ENCODE measurements at regions of chr2 and their contacts with region 1.

Region 1: GRCh38 chr2:199739413-199740110 is 111.4 kb downstream of the FTCDNL1 start:
- DNase-seq: no peak
- H3K4me3 ChIP-seq: no peak overlapping the region
- CTCF ChIP-seq: peak; percentile 73

Region 2: DNA sequence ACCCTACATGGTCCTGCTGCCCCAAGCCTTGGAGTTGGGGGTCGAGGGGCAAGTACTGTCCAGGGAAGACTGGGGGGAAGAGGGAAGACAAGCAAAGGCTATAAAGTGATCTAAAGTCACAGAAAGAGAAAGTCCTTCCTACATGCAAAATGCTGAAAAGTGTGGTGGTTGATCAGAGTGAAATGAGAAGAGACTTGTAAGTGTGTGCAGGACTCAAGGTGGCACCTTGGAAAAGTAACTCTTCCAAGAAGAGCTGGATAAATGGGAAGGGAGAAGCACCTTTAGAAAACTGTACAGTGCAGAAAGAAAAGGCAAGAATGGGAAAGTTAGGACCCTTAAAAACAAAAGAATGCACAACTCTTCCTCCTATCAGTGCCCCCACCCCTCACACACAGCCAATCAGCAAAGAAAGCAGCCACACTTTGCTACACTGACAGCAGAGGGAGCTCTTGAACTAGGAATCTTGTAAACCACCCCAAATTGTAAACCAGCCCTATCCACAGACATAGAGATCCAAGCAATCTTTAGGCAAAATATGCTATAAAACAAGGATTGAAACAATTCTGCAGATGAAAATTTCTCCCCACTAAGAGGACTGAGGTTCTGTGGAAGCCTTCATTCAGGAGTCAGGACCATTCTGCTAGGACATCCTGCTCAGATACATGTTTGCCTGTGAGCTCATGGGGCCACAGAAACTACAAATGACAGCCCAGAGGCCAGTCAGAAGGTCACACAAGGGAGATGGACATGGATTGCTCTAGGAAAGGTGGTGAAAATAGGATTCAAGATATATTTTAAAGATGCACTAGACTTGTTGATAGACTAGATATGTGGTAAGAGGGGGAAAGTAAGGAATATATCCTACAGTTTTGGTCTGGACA is 35.0 kb before region 1 on chr2:
- CTCF ChIA-PET with region 1: interaction called, 28 read pairs
- POLR2A ChIA-PET with region 1: no interaction called
- DNase-seq: no peak
- H3K4me3 ChIP-seq: no peak overlapping the region
- CTCF ChIP-seq: peak; percentile 40

Region 3: GRCh38 chr2:199716807-199717586 is 22.6 kb before region 1 on chr2:
- CTCF ChIA-PET with region 1: interaction called, 14 read pairs
- POLR2A ChIA-PET with region 1: no interaction called
- DNase-seq: no peak
- H3K4me3 ChIP-seq: no peak overlapping the region
- CTCF ChIP-seq: no peak

Region 4: DNA sequence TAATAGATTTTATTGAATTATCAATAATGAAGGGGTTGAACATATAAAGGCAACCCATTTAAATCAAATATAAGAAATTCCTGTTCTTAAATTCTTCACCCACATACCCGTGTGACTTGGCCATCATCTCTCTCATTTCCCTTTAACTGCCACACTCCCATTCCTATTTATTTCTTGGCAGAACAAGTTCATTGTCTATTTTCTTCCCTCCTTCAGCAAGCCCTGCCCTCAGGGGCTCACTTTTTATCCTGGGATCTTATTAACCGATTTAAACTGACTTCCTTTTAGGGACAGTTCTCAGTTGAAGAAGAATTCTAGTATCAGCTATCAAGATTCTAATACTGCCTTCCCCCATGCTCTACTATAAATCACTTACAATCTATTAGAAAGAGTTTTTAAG is 11.8 kb before region 1 on chr2:
- CTCF ChIA-PET with region 1: interaction called, 18 read pairs
- POLR2A ChIA-PET with region 1: no interaction called
- DNase-seq: no peak
- H3K4me3 ChIP-seq: no peak overlapping the region
- CTCF ChIP-seq: no peak

Region 5: DNA sequence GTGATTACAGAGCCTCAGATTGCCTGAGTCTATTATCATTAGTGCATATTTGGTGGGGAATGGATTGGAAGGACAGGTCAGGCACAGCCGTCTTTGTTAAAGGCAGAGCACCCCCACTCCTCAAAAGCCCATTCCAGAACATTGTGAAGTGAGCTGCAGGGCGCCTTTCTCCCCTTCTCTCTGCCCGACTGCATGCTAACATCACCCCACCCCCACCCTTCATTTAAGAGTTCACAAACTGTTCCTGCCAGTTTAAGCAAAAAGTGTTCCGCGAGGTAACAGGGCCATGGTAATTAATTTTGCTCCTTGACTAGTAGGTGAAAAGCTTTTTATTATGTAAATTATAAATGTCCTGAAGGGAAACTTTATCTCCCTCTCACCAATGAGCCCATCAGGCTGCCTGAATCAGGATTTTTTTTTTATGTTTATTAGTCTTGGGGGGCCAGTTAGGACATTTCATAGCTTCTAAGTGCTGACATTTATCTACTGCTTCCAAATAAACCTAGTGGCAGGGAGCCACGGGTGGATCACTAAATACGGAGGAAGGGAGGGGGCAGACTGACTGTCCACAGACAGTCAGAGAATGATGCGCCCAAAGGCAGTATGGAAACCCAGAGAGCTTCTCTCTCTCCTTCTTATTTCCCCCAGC is 12.0 kb after region 1 on chr2:
- CTCF ChIA-PET with region 1: interaction called, 30 read pairs
- POLR2A ChIA-PET with region 1: no interaction called
- DNase-seq: no peak
- H3K4me3 ChIP-seq: no peak overlapping the region
- CTCF ChIP-seq: no peak

Region 6: DNA sequence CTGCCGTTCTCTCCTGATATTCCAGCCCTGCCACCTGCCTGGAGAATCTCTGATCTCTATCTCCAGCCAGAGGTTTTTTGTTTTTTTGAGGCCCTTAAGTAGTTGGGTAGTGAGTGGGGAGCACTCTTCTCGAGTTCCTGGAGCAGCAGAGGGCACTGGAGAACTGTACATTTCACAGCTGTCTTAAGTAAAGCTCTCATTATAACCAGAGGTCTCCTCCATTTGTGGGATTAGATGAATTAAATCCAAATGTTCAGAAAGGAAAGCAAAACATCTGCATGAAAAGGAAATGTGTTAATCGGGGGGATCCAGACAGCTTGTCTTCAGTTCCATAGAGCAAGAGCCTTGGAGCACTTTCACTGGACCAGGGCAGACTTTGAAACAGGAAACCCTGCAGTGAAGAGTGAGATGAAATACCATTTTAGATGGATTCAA is 879.0 kb after region 1 on chr2:
- CTCF ChIA-PET with region 1: no interaction called
- POLR2A ChIA-PET with region 1: no interaction called
- DNase-seq: peak; percentile 45
- H3K4me3 ChIP-seq: no peak overlapping the region
- CTCF ChIP-seq: peak; percentile 36